Left colon (tissue), 2 donors: ENCODE measurements at regions of chr17 and their contacts with region 1.

Region 1: DNA sequence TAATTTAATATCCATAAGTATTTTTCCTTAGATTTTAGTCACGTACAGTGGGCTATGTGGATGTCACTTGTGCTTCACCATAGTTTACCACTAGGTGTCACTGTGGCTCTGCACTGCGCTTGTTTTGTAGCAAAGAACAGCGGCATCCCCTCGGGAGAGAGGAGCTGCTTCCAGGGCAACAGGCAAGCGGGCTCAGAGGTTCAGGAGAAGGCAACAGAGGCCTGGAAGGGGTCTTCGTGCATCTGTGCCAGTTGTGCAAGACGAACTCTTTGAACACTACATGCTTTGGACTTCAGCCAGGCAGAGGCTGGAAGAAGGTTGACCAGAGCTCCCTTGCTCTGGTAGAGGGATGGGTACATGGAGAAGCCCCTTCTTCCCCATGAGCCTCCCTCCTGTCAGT is 20.6 kb downstream of the CYB561 start:
- DNase-seq: peak in 1 of 2 donors; percentile 73
- ATAC-seq: peak; percentile 84

Region 2: DNA sequence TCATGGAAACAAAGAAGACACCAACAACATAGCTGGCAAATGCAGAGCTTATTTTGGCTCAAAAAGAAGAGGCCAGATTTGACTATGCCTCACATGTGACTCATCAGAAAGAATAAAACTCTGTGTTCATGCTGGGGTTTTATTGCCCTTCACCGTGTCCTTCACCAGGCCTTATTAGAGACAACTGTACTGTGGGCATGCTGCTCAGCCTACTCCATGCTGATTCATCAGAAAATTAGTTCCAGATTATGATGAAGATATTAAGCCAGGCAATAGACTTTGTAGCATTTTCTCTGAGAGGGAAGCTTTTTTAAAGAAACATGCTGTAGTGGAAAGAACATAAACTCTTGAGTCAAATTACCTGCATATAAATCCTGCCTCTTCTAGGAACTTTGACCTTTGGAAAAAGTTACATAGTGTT is 69.1 kb before region 1 on chr17:
- intact Hi-C with region 1: no loop called
- DNase-seq: no peak
- ATAC-seq: peak; percentile 83

Region 3: DNA sequence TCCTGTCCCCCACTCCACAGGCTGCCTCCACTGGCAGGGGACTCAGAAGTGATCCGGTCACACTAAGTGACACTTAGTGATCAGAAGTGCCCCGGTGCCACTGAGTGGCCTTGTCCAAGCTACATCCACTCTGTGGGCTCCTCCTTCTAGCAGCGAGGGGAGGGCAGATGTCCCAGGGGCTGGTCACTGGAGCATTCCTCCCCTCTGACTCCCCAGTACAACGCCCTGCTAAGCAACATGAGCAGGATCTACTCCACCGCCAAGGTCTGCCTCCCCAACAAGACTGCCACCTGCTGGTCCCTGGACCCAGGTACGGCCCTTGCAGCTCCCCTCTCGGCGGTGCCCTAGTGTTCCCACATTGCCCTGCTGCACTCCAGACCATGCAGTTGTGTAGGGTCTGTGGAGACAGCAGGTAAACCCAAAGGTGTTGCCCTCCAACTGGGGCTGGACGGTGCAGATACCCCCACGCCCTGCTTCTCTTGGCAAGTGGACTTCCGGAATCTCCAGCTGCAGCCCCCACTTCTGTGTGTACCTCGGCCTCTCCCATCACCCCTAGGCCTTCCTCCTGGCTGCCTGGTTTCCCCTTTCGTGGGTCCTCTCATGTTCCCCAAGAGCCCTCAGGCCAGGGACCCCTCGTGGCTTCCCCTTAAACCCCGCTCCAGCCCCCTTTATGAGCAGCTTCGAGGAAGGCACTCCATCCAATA is 53.5 kb after region 1 on chr17:
- intact Hi-C with region 1: loop called in 1 of 2 experiments (anchors 5 kb)
- DNase-seq: peak; percentile 85 to 89
- ATAC-seq: peak; percentile 75

Region 4: DNA sequence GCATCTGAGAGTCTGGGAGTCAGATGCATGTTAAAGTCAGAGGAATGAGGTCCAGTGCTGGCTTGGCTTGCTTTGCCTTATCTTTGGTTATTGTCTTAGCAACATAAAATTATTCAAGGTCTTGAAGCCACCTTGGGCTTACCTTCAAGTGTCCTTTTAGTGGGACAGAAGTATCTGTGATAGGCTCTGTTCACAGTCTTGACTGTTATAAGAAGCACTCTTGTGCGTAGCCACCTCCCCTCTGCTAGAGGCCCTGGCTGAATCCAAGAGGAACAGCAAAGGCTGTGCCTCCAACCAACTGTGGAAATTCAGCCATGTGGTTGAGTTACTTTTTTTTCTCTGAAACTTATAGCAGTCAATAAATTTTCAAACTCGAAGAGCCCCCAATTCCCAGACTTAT is 188.2 kb after region 1 on chr17:
- intact Hi-C with region 1: loop called (anchors 2 to 10 kb)
- DNase-seq: no peak
- ATAC-seq: no peak